ENCODE measurements at regions of chr17 and their contacts with region 1.

Region 1: GRCh38 chr17:80832888-80833583 is 158.6 kb upstream of the CHMP6 start:
- DNase-seq: peak; percentile 85 to 92 (median 86)
- H3K4me3 ChIP-seq: peak overlapping the region; percentile 48
- H3K27ac ChIP-seq: peak overlapping the region; percentile 46 to 85
- H3K4me1 ChIP-seq: peaks cover 5% of the 10 kb centered on the region
- H3K27me3 ChIP-seq: no peaks in the 10 kb centered on the region
- CTCF ChIP-seq: no peak
- EP300 ChIP-seq: peak; percentile 59
- POLR2A ChIP-seq: peak; percentile 63

Region 2: GRCh38 chr17:80614332-80615047 is 218.5 kb before region 1 on chr17:
- intact Hi-C with region 1: no loop called
- DNase-seq: no peak
- H3K4me3 ChIP-seq: no peak overlapping the region
- H3K27ac ChIP-seq: no peak overlapping the region
- H3K4me1 ChIP-seq: no peaks in the 10 kb centered on the region
- H3K27me3 ChIP-seq: no peaks in the 10 kb centered on the region
- CTCF ChIP-seq: no peak
- EP300 ChIP-seq: no peak
- POLR2A ChIP-seq: no peak

Region 3: GRCh38 chr17:80773243-80773991 is 59.6 kb before region 1 on chr17:
- intact Hi-C with region 1: loop called in 1 of 4 experiments (anchors 10 kb)
- DNase-seq: peak in 1 of 5 donors; percentile 62
- H3K4me3 ChIP-seq: no peak overlapping the region
- H3K27ac ChIP-seq: no peak overlapping the region
- H3K4me1 ChIP-seq: no peaks in the 10 kb centered on the region
- H3K27me3 ChIP-seq: no peaks in the 10 kb centered on the region
- CTCF ChIP-seq: no peak
- EP300 ChIP-seq: no peak
- POLR2A ChIP-seq: no peak

Region 4: GRCh38 chr17:80899402-80900268 is 66.6 kb after region 1 on chr17:
- intact Hi-C with region 1: no loop called
- DNase-seq: no peak
- H3K4me3 ChIP-seq: no peak overlapping the region
- H3K27ac ChIP-seq: no peak overlapping the region
- H3K4me1 ChIP-seq: no peaks in the 10 kb centered on the region
- H3K27me3 ChIP-seq: no peaks in the 10 kb centered on the region
- CTCF ChIP-seq: peak in 1 of 3 donors; percentile 11
- EP300 ChIP-seq: no peak
- POLR2A ChIP-seq: no peak